Vagina (tissue), 2 donors: ENCODE measurements at regions of chr22 and their contacts with region 1.

Region 1: GRCh38 chr22:24466716-24467328 is 28.3 kb upstream of the UPB1 start:
- DNase-seq: no peak
- H3K4me3 ChIP-seq: no peak overlapping the region
- H3K27ac ChIP-seq: no peak overlapping the region
- H3K4me1 ChIP-seq: peaks cover 6% of the 10 kb centered on the region
- H3K27me3 ChIP-seq: no peaks in the 10 kb centered on the region
- CTCF ChIP-seq: no peak
- POLR2A ChIP-seq: no peak

Region 2: DNA sequence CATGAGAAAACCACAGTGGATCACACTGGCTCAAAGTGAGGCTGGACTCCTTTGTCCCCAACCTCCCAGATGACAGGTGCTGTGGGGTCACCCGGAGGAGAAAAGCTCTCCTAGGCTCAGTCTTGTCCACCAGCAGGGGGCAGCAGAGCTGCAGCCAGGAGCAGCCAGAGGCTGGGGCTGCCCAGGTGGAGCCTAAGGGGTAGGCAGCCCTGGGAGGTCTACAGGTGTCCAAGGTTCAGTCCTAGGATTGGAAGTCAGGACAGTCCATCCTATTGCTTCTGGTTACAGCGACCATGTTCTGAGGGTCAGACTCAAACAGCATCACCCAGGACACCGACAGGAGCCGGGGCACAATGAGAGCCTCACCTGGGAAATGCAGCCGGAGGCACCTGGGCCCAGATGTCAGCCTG is 1656.8 kb before region 1 on chr22:
- intact Hi-C with region 1: loop called (anchors 10 kb)
- DNase-seq: peak in 1 of 2 donors; percentile 77
- H3K4me3 ChIP-seq: no peak overlapping the region
- H3K27ac ChIP-seq: no peak overlapping the region
- H3K4me1 ChIP-seq: no peaks in the 10 kb centered on the region
- H3K27me3 ChIP-seq: no peaks in the 10 kb centered on the region
- CTCF ChIP-seq: peak in 1 of 3 experiments; percentile 26
- POLR2A ChIP-seq: no peak

Region 3: DNA sequence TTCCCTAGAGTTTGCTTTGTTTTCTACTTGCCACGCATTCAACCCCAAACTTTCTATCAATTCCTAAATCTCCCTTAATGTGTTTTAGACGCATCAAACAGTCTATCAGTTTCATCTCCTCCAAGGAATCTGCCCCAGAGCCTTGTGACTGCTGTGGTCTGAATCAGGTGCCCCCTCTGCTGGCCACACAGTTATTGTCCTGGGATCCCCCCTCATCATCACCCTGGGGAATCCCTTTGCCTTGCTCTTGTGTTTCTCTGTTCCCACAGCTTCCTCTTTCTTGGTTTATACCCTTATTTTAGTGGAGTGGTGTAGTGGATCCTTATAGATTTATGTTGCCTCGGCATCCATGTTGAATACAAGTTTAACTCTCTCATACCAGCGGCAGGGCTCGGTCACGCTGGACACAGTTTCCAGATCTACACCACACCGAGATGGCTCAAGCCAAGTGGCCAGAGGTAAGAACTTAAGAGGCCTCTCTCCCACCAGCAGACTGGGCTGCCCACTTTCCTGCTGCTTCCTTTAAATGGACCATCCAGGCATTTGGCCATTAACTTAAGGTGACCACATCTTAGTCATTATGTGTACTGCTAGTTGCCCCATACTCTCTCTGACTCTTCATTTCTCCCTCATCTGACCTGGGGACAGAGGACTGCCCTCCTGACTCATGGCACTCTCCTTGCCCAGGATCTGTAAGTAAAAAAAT is 36.5 kb after region 1 on chr22:
- intact Hi-C with region 1: no loop called
- DNase-seq: no peak
- H3K4me3 ChIP-seq: no peak overlapping the region
- H3K27ac ChIP-seq: no peak overlapping the region
- H3K4me1 ChIP-seq: no peaks in the 10 kb centered on the region
- H3K27me3 ChIP-seq: no peaks in the 10 kb centered on the region
- CTCF ChIP-seq: peak; percentile 19 to 54 (median 22)
- POLR2A ChIP-seq: no peak

Region 4: DNA sequence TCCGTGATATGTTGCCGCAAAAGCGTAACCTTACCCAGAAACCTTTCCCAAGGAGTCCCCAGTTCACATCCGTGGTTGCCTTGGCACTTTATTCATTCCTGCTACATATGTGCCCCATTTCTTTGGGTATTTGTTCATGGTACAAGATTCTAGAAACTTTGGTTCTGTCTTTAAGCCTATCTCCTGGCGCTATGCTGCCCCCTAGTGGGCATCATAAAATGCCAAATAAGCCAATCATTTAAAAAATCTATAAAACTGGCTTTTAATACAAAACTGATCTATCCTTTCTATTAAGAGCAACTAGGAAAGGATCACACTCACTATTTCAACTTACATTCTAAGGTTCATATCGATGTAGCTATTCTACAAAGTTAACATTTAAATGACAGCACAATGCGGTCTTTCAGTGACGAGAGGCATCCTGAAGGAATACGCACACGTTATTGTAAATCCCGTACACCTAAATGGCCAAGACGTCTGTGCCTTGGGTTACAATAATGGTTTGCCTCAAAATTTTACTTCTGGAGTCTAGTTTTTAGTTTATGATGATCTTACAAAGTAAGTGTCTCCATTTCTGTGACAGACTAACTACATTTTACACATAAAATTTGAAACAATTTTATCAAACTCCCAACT is 291.5 kb after region 1 on chr22:
- intact Hi-C with region 1: no loop called
- DNase-seq: no peak
- H3K4me3 ChIP-seq: no peak overlapping the region
- H3K27ac ChIP-seq: no peak overlapping the region
- H3K4me1 ChIP-seq: no peaks in the 10 kb centered on the region
- H3K27me3 ChIP-seq: no peaks in the 10 kb centered on the region
- CTCF ChIP-seq: peak; percentile 57 to 73 (median 62)
- POLR2A ChIP-seq: no peak